Panc1 (cell line): ENCODE measurements at regions of chr11 and their contacts with region 1.

Region 1: DNA sequence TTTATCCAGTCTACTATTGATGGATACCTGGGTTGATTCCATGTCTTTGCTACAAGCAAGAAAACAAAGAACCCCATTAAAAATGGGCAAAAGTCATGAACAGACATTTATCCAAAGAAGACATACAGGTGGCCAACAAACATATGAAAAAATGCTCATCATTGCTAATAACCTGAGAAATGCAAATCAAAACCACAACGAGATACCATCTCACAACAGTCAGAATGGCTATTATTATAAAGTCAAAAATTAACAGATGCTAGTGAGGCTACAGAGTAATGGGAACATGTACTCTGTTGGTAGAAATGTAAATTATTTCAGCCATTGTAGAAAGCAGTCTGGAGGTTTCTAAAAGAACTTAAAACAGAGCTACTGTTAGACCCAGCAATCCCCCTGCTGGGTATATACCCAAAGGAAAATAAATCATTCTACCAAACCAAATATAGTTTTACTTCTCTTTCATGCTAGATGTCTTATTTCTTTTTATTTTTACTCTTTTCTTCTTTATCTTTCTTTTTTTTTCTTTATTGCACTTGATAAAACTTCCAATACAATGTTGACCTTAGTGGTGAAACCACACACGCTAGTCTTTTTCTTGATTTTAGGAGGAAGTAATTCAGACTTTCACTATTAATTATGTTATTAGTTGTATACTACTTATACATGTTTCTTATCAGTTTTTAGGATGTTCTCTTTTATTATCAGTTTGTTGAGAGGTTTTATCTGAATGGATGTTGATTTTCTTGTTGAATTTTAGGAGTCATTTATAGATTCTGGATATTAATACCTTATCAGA is 14.3 kb downstream of the TRIM22 start:
- DNase-seq: no peak
- ATAC-seq: no peak
- H3K4me3 ChIP-seq: no peak overlapping the region
- H3K27ac ChIP-seq: no peak overlapping the region
- H3K4me1 ChIP-seq: no peaks in the 10 kb centered on the region
- H3K27me3 ChIP-seq: peaks cover 2% of the 10 kb centered on the region; the same call in 1 of the 2 replicates
- CTCF ChIP-seq: no peak

Region 2: GRCh38 chr11:5665746-5666390 is 38.1 kb before region 1 on chr11:
- CTCF ChIA-PET with region 1: interaction called, 11 read pairs
- POLR2A ChIA-PET with region 1: no interaction called
- in situ Hi-C with region 1: no loop called
- intact Hi-C with region 1: no loop called
- DNase-seq: no peak
- ATAC-seq: no peak
- H3K4me3 ChIP-seq: no peak overlapping the region
- H3K27ac ChIP-seq: no peak overlapping the region
- H3K4me1 ChIP-seq: no peaks in the 10 kb centered on the region
- H3K27me3 ChIP-seq: no peaks in the 10 kb centered on the region
- CTCF ChIP-seq: no peak